Activated naive CD4-positive, alpha-beta T cell treated with anti-CD3 and anti-CD28 coated beads for 36 hours (primary cell): ENCODE measurements at regions of chr2 and their contacts with region 1.

Region 1: DNA sequence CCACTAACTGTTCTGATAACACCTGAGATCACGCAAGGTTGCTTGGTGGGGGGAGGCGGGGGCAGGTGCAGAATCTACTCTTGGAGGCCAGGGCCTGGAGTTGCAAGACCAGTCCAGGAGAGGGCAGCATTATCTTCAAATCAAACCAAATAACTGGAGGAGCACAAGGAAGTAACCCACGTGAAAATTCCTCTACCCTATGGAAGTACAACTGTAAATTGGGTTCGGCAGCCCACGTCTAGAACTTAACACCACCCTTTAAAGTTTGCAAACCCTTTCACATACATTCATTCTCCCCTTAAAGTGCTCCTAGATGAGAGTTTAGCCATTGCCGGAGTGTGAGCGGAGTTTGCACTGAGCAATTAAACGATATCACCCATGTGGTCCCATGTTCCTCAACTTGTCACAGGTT is 19.6 kb upstream of the CXCR1 start:
- DNase-seq: peak; percentile 87
- H3K4me3 Mint-ChIP-seq: no peak overlapping the region
- H3K27ac Mint-ChIP-seq: no peak overlapping the region
- H3K4me1 Mint-ChIP-seq: peaks cover 7% of the 10 kb centered on the region
- H3K27me3 Mint-ChIP-seq: no peaks in the 10 kb centered on the region

Region 2: GRCh38 chr2:218168635-218169462 is 17.5 kb before region 1 on chr2:
- CTCF ChIA-PET with region 1: interaction called, 12 read pairs
- intact Hi-C with region 1: no loop called
- DNase-seq: peak; percentile 79
- H3K4me3 Mint-ChIP-seq: no peak overlapping the region
- H3K27ac Mint-ChIP-seq: no peak overlapping the region
- H3K4me1 Mint-ChIP-seq: peaks cover 26% of the 10 kb centered on the region
- H3K27me3 Mint-ChIP-seq: no peaks in the 10 kb centered on the region

Region 3: DNA sequence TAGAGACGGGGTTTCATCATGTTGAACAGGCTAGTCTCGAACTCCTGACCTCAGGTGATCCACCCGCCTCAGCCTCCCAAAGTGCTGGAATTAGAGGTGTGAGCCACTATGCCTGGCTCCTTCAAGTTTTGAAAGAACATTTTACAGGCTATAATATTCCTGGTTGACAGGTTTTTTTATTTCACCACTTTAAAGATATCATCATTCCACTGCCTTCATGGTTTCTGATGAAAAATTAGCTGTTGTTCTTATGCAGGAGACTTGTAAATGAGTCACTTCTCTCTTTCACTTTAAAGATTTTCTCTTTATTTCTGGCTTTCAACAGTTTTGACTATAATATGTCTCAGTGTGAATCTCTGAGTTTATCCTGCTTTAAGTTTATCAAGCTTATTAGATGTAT is 22.7 kb after region 1 on chr2:
- CTCF ChIA-PET with region 1: interaction called, 8 read pairs
- intact Hi-C with region 1: loop called (anchors 2 kb)
- DNase-seq: no peak
- H3K4me3 Mint-ChIP-seq: no peak overlapping the region
- H3K27ac Mint-ChIP-seq: no peak overlapping the region
- H3K4me1 Mint-ChIP-seq: peaks cover 5% of the 10 kb centered on the region
- H3K27me3 Mint-ChIP-seq: no peaks in the 10 kb centered on the region

Region 4: GRCh38 chr2:218229239-218229638 is 42.9 kb after region 1 on chr2:
- CTCF ChIA-PET with region 1: interaction called, 5 read pairs
- intact Hi-C with region 1: loop called (anchors 1 kb)
- DNase-seq: peak; percentile 66
- H3K4me3 Mint-ChIP-seq: peak overlapping the region; percentile 32
- H3K27ac Mint-ChIP-seq: peak overlapping the region; percentile 87
- H3K4me1 Mint-ChIP-seq: peaks cover 81% of the 10 kb centered on the region
- H3K27me3 Mint-ChIP-seq: no peaks in the 10 kb centered on the region

Region 5: GRCh38 chr2:218257390-218257981 is 71.1 kb after region 1 on chr2:
- CTCF ChIA-PET with region 1: interaction called, 20 read pairs
- intact Hi-C with region 1: loop called (anchors 1 kb)
- DNase-seq: peak; percentile 79
- H3K4me3 Mint-ChIP-seq: no peak overlapping the region
- H3K27ac Mint-ChIP-seq: peak overlapping the region; percentile 87
- H3K4me1 Mint-ChIP-seq: peaks cover 18% of the 10 kb centered on the region
- H3K27me3 Mint-ChIP-seq: no peaks in the 10 kb centered on the region

Region 6: DNA sequence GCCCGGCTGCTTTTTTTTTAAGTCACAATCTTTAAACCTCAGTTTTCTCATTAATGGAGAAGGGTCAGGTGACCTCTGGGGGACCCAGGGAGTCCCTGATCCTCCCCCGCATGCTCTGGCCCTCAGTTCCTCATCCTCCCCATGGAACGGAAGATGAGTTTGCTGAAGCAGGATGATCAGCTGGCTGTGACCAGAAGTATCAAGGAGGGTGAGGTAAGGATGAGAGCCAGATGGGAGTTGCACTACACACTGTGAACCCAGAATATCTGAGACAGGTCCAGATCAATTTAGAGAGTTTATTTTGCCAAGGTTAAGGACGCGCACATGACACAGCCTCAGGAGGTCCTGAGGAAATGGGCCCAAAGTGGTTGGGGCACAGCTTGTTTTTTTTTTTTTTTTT is 174.1 kb after region 1 on chr2:
- CTCF ChIA-PET with region 1: interaction called, 9 read pairs
- intact Hi-C with region 1: loop called (anchors 1 kb)
- DNase-seq: no peak
- H3K4me3 Mint-ChIP-seq: no peak overlapping the region
- H3K27ac Mint-ChIP-seq: no peak overlapping the region
- H3K4me1 Mint-ChIP-seq: no peaks in the 10 kb centered on the region
- H3K27me3 Mint-ChIP-seq: no peaks in the 10 kb centered on the region

Region 7: DNA sequence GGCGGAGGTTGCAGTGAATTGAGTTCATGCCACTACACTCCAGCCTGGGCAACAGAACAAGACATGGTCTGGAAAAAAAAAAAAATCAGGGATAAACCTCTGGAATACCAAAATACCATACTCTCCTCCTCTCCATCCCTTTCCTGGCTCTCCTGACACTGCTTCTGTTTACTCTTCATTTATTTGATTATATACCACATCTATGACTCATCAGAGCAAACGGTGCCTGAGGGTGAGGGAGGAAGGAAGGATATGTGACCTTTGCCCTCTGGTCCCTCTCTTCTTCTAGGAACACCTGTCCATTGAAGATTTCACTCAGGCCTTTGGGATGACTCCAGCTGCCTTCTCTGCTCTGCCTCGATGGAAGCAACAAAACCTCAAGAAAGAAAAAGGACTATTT is 262.6 kb after region 1 on chr2:
- CTCF ChIA-PET with region 1: no interaction called
- intact Hi-C with region 1: no loop called
- DNase-seq: no peak
- H3K4me3 Mint-ChIP-seq: no peak overlapping the region
- H3K27ac Mint-ChIP-seq: no peak overlapping the region
- H3K4me1 Mint-ChIP-seq: no peaks in the 10 kb centered on the region
- H3K27me3 Mint-ChIP-seq: no peaks in the 10 kb centered on the region